Panc1 (cell line): ENCODE measurements at regions of chr18 and their contacts with region 1.

Region 1: DNA sequence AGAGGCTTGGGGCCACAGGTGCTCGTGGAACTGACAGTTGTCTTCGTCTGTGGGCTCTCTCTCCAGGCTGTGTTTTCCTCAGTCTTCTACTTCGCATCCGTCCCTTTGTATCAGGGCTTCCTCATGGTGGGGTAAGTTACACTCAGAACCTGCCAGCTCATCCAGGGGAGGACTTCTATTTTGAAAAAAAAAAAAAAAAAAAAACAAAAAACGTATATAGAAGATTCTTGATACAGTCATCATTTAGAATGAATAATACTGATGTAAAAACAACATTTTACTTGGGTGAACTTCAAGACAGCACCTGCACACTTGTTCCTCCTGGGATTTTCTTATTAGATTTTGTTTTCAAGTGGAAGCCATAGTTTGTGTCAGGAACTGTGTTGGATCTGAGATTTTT is 47.7 kb upstream of the NFATC1 start:
- DNase-seq: no peak
- ATAC-seq: no peak
- H3K4me3 ChIP-seq: no peak overlapping the region
- H3K27ac ChIP-seq: no peak overlapping the region
- H3K4me1 ChIP-seq: no peaks in the 10 kb centered on the region
- H3K27me3 ChIP-seq: no peaks in the 10 kb centered on the region
- CTCF ChIP-seq: no peak

Region 2: GRCh38 chr18:78902795-78903435 is 445.2 kb before region 1 on chr18:
- CTCF ChIA-PET with region 1: no interaction called
- POLR2A ChIA-PET with region 1: interaction called, 11 read pairs
- in situ Hi-C with region 1: no loop called
- intact Hi-C with region 1: no loop called
- DNase-seq: no peak
- ATAC-seq: 0 out of 2 replicates have a peak, but pooled peaks have one; percentile 28
- H3K4me3 ChIP-seq: no peak overlapping the region
- H3K27ac ChIP-seq: no peak overlapping the region
- H3K4me1 ChIP-seq: no peaks in the 10 kb centered on the region
- H3K27me3 ChIP-seq: peaks cover 13% of the 10 kb centered on the region; the same call in 1 of the 2 replicates
- CTCF ChIP-seq: no peak

Region 3: DNA sequence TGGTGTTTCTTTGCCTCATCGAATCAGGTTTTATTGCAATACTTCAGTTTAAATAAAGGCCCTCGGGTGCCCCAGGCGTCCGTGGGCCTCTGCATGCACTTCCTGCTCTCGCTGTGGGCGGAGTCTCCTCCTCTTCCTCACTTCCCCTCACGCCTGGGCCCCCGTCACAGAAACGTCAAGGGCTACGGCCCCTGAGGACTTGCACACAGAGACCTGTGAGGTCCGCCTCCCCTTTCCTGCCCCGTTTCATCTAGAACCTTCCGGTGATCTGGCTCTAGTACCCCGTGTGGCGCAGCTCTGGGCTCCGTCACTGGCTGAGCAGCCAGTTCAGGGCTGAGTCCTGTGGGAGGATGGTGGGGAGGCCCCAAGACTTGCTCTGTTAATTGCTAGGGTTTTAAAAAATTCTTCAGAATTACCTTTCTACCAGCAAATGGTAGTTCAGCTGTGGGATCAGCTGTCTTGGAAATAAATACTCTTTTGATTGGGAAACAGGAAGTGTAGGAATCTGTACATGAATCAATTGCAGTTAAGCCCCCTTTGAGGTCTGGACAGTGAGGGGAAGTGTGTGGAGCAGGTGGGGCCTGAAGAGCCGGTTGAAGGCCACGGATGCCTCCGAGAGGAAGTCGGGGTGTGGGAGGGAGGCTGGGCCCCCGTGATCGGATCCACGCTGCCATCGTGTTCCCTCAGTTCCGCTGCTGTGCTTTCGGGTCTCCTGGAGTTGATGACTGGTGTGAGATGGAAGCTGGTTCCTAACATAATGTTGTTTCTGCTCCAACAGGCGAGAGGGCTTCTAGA is 57.9 kb after region 1 on chr18:
- CTCF ChIA-PET with region 1: no interaction called
- POLR2A ChIA-PET with region 1: no interaction called
- in situ Hi-C with region 1: no loop called
- intact Hi-C with region 1: no loop called
- DNase-seq: no peak
- ATAC-seq: no peak
- H3K4me3 ChIP-seq: no peak overlapping the region
- H3K27ac ChIP-seq: peak overlapping the region; percentile 32
- H3K4me1 ChIP-seq: peaks cover 27% of the 10 kb centered on the region
- H3K27me3 ChIP-seq: no peaks in the 10 kb centered on the region
- CTCF ChIP-seq: no peak

Region 4: DNA sequence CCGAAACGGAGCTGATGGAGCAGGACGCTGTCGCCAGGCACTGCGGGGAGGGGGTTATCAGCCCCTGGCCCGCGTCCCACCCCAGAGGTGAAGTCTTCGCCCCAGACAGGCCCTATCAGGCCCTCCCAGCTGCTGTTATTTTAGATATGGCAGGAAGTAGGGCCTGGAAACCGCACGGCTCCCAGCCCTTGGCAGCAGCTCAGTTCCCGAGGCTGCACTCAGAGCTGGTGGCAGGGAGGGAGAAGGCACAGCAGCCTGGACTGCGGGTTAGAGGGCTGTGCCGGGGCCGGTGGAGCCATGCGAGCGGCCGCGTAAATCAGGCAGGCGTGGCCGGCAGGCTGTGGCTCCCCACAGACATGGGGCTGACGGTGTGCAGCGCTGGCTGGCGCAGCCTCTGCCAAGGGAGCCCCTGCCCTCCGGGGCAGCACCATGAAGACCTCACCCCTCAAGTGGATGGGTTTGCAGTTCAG is 159.0 kb after region 1 on chr18:
- CTCF ChIA-PET with region 1: no interaction called
- POLR2A ChIA-PET with region 1: no interaction called
- in situ Hi-C with region 1: no loop called
- intact Hi-C with region 1: no loop called
- DNase-seq: no peak
- ATAC-seq: peak; percentile 64
- H3K4me3 ChIP-seq: no peak overlapping the region
- H3K27ac ChIP-seq: no peak overlapping the region
- H3K4me1 ChIP-seq: no peaks in the 10 kb centered on the region
- H3K27me3 ChIP-seq: no peaks in the 10 kb centered on the region
- CTCF ChIP-seq: no peak